GM23248 (cell line): ENCODE measurements at regions of chr13 and their contacts with region 1.

Region 1: GRCh38 chr13:47126432-47126831 is 229.6 kb upstream of the HTR2A start:
- DNase-seq: peak; percentile 16
- H3K4me3 ChIP-seq: no peak overlapping the region
- H3K27ac ChIP-seq: no peak overlapping the region
- H3K4me1 ChIP-seq: no peaks in the 10 kb centered on the region
- H3K27me3 ChIP-seq: no peaks in the 10 kb centered on the region

Region 2: DNA sequence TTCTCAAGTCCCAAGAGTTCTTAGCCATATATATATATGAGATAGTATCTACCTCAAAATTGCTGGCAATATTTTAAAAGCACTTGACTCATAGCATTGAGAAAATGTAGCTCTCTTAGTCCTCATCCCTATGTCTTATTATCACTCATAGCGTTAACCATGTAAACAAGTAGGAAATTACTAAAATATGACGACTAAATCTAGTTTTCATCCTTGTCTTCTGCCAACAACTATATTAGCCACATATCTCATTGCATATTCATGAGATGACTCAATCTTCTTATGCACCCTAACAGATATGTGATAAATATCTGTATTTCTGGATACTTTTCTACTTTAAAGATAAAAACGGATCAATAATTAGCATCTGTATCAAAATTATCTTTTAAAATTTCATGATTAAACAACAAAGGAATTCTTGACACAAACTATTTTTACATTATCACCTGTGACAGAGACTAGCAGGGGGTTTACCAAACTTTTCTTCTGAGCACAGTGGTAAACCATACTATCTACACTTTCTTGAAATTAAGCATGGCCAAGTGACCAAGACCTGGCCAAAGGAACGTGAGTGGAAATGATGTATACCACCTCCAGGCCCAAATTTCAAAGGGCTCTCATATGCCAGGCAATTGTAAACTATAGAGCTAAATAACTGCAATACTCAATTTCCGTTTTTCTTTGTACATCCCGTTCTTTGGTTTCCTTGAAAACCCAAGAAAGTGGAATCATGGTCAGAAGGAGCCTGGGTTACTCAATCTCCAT is 1119.6 kb before region 1 on chr13:
- in situ Hi-C with region 1: no loop called
- DNase-seq: peak; percentile 24
- H3K4me3 ChIP-seq: no peak overlapping the region
- H3K27ac ChIP-seq: no peak overlapping the region
- H3K4me1 ChIP-seq: no peaks in the 10 kb centered on the region
- H3K27me3 ChIP-seq: no peaks in the 10 kb centered on the region

Region 3: DNA sequence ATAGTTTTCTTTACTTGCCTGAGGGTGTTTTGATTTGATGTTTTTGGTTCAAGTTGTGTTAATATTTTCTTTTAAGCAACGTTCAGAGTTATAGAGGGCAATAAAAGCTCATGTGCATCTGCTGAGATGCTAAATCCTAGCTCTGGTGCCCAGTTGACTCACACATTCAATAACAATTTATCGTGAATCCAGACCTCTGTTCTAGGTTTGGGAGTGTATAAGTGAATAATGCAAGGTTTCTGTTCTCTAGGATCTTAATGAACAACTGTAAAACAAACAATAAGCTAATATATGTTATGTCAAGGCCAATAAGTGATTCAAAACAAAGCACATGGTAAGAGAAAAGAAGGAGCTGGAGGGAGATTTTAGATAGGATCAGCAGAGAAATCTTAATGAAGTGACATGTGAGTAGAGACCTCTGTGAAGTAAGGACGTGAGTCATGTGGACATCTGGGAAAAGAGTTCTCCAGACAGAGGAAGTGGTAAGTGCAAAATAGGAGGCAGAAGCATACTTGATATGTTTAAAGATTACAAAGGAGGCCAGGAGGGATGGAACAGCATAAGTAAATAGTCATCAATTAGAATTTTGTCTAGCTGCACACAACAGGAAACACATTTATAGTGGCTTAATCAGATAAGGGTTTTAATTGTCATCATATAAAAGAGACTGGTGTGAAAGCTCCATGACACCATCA is 48.9 kb after region 1 on chr13:
- in situ Hi-C with region 1: loop called (anchors 5 kb)
- DNase-seq: peak; percentile 87
- H3K4me3 ChIP-seq: peak overlapping the region; percentile 15; the same call in 1 of the 2 replicates
- H3K27ac ChIP-seq: peak overlapping the region; percentile 52
- H3K4me1 ChIP-seq: peaks cover 14% of the 10 kb centered on the region
- H3K27me3 ChIP-seq: no peaks in the 10 kb centered on the region